ENCODE measurements at regions of chr5 and their contacts with region 1.

Region 1: GRCh38 chr5:142108432-142109330 is at the start of gene NDFIP1:
- DNase-seq: peak; percentile 86
- H3K4me3 Mint-ChIP-seq: peak within 1 kb of the TSS; percentile 94
- H3K27ac Mint-ChIP-seq: peak within 1 kb of the TSS; percentile 90
- H3K4me1 Mint-ChIP-seq: peaks cover 51% of the 10 kb centered on the region
- H3K27me3 Mint-ChIP-seq: no peaks in the 10 kb centered on the region
- total RNA-seq, gene NDFIP1: 57.1 to 59.3 TPM

Region 2: DNA sequence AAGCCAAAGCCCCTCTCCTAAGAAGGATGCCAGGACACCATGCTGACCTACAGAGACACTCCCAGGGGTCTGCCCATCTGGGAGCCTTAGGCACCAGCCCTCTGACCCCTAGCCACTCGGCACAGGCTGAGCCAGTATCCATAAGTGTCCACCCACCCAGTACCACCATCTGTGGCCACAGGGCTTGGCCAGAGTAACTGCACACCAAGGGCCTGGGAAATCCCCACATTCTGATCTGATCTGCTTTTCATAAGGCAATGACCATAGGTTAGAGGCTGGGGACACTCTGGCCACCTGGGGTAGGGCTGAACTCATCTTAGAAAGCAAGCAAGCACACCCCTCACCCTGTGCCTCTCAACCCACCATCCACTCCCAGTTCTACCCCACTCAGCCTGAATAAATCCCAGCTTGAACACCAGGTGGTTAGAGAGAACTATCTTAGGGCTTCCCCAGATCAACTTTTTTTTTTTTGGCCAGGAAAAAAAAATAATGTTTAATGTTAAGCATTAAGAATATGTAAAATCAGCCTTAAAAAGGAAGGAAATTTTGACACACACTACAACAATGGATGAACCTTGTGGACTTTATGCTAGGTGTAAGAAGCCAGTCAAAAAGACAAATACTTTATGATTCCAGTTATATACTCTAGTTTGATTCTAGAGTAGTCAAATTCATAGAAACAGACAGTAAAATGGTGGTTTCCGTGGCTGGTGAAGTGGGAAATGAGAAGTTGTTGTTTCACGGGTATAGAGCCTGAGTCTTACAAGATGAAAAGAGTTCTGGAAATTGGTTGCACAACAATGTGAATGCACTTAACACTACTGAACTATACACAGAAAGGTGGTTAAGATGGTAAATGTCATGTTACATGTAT is 102.1 kb before region 1 on chr5:
- CTCF ChIA-PET with region 1: interaction called, 68 read pairs
- POLR2A ChIA-PET with region 1: interaction called, 128 read pairs
- DNase-seq: no peak
- H3K4me3 Mint-ChIP-seq: no peak overlapping the region
- H3K27ac Mint-ChIP-seq: peak overlapping the region; percentile 48
- H3K4me1 Mint-ChIP-seq: peaks cover 38% of the 10 kb centered on the region
- H3K27me3 Mint-ChIP-seq: no peaks in the 10 kb centered on the region

Region 3: DNA sequence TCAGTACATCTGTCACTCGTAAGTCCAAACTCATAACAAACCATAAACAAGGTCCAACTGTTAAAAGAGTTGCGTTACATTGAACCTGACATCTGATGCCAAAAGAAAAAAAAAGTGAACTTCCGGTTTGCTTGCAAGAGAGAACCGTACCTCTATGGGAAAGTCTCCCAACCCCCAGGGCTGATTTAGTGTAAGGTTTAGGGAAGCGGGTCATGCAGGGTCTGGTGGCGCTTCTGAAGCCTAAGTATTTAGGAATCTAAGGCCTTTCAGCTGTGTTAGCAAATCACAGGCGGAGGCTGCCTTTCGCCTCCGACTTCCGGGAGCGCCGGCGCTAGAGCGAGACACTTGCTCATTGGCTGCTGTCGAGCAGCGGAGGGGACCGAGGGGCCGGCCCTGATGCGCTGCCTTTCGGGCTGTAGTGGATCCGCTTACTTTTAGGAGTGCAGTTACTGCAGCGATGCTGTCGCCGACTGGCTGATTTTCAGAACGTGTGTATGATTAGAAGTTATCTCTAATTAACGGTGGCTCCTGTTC is 83.8 kb before region 1 on chr5:
- CTCF ChIA-PET with region 1: no interaction called
- POLR2A ChIA-PET with region 1: interaction called, 26 read pairs
- DNase-seq: peak; percentile 89
- H3K4me3 Mint-ChIP-seq: peak overlapping the region; percentile 81
- H3K27ac Mint-ChIP-seq: peak overlapping the region; percentile 93
- H3K4me1 Mint-ChIP-seq: peaks cover 18% of the 10 kb centered on the region
- H3K27me3 Mint-ChIP-seq: peaks cover 2% of the 10 kb centered on the region

Region 4: DNA sequence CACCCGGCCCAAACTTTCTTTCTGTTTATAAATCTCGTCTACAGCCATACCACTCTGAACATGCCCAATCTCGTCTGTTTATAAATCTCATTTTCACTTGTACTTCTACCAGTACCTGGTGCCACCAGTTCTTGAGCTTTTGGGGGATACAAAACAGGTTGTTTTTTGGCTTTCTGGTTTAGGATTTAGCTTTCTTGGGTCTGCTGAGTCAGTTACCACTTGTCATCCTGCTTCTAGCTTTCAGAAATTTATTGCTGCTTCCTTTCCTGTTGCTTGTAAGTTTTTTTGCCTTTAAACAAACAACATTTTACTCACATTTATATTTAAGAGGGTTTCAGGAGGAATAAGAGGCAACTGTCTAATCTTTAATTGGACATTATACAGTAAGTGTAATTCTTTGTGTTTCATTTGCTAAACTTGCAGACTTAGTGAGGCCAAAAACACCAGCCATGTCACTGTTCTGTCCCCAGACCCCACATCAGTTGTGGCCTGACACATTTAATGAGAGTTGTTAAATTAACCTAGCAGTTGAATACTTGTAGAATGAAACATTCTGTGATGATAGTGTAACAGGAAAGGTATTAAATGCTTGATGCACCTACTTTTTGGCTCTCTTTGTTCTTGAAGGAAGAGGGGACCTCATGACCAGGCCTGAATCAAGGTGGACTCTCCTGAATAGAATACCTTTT is 11.7 kb after region 1 on chr5:
- CTCF ChIA-PET with region 1: no interaction called
- POLR2A ChIA-PET with region 1: interaction called, 12 read pairs
- DNase-seq: no peak
- H3K4me3 Mint-ChIP-seq: peak overlapping the region; percentile 18
- H3K27ac Mint-ChIP-seq: peak overlapping the region; percentile 73
- H3K4me1 Mint-ChIP-seq: peaks cover 53% of the 10 kb centered on the region
- H3K27me3 Mint-ChIP-seq: no peaks in the 10 kb centered on the region

Measured in activated CD4-positive, alpha-beta memory T cell treated with anti-CD3 and anti-CD28 coated beads, Interleukin-2, amount 10 ng/mL, durations not matched to agents 7 days and 5 days (primary cell).